ENCODE measurements at regions of chr10 and their contacts with region 1.

Region 1: GRCh38 chr10:83397806-83398205 is 741.5 kb upstream of the GHITM start:
- DNase-seq: no peak
- ATAC-seq: peak; percentile 60

Region 2: DNA sequence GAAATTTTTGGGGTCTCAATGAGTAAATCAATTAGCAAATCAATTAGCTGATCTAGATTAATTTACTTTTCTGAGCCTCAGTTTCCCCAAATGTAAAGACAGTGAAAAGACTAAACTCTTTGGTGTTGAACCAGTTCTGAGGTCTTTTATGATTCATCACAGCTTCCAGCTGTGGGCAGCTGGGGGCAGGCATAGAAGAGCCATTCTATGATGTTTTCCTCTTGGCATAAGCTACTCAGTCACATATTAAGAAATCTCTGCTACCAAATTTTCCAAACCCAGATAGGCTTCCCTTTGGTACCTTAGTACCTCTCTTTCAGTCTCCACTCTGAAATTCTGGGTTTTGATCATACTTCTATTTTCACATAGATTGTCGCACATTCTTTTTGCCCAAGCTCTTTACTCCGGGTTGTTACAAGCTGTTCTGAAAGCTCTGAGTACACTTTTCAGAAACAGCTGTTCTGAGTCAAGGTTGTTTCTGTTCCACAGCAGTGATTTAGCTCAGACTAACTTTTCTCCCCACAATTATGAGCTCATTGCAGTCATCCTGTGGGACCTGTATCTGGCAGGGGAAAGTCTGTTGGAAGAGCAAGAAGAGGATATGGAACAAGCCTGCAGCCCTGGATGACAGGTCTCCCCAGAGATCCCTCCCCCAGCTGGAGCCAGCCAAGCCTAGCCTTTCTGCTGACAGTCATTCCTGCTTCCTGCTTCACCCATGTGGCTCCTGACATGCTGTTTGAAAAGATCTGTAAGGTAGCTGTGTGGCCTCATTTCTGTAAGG is 141.9 kb after region 1 on chr10:
- intact Hi-C with region 1: loop called (anchors 5 kb)
- DNase-seq: peak; percentile 79
- ATAC-seq: peak; percentile 95